T-cell (primary cell): ENCODE measurements at regions of chr5 and their contacts with region 1.

Region 1: GRCh38 chr5:134145779-134146581 is 30.8 kb downstream of the SKP1 start:
- DNase-seq: peak; percentile 49 to 90 (median 78)
- ATAC-seq: peak; percentile 59 to 70 (median 66)
- H3K4me3 ChIP-seq: no peak overlapping the region
- H3K4me3 Mint-ChIP-seq: no peak overlapping the region
- H3K27ac ChIP-seq: peak overlapping the region; percentile 21
- H3K27ac Mint-ChIP-seq: peak overlapping the region; percentile 75 to 79
- H3K4me1 ChIP-seq: peaks cover 13 to 44% of the 10 kb centered on the region in 2 experiments
- H3K4me1 Mint-ChIP-seq: peaks cover 42 to 73% (median 50%) of the 10 kb centered on the region in 3 donors
- H3K27me3 ChIP-seq: no peaks in the 10 kb centered on the region
- H3K27me3 Mint-ChIP-seq: no peaks in the 10 kb centered on the region

Region 2: DNA sequence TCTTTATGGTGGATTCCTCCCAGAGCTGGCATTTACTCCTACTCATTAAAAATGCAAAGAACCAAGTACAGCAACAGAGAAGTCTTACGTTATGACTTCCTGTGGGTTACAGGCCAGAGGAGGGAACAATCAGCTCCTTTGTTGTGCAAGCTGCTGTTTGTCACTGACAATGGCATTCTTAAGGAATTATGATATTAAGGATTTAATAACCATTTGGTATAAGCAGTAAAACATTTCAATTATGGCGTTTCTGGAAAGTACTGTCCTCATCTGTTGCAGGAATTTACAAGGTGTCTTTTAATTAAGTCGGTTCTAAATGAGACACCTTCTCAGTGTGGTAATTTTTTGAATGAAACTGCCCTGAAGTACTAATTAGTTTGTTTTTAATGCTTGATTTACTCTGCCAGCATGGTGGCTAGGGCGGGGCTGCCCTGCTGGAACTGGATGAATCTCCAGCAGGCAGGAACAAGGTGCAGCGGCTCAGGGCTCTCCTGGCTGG is 92.1 kb before region 1 on chr5:
- CTCF ChIA-PET with region 1: no interaction called
- POLR2A ChIA-PET with region 1: no interaction called
- DNase-seq: peak in 1 of 35 experiments; percentile 52
- ATAC-seq: peak; percentile 82 to 95 (median 84)
- H3K4me3 ChIP-seq: peak overlapping the region in 1 of 2 donors; percentile 6
- H3K4me3 Mint-ChIP-seq: peak overlapping the region; percentile 21 to 67 (median 36)
- H3K27ac ChIP-seq: peak overlapping the region; percentile 44
- H3K27ac Mint-ChIP-seq: peak overlapping the region; percentile 91 to 94
- H3K4me1 ChIP-seq: peaks cover 27 to 40% of the 10 kb centered on the region in 2 experiments
- H3K4me1 Mint-ChIP-seq: peaks cover 49 to 54% (median 53%) of the 10 kb centered on the region in 3 donors
- H3K27me3 ChIP-seq: no peaks in the 10 kb centered on the region
- H3K27me3 Mint-ChIP-seq: no peaks in the 10 kb centered on the region

Region 3: GRCh38 chr5:134119720-134120119 is 26.3 kb before region 1 on chr5:
- CTCF ChIA-PET with region 1: interaction called, 6 to 10 read pairs
- POLR2A ChIA-PET with region 1: interaction called, 3 to 4 read pairs
- DNase-seq: peak in 1 of 35 experiments; percentile 52
- ATAC-seq: no peak
- H3K4me3 ChIP-seq: peak overlapping the region; percentile 91 to 93
- H3K4me3 Mint-ChIP-seq: peak overlapping the region; percentile 88 to 99 (median 92)
- H3K27ac ChIP-seq: peak overlapping the region; percentile 62
- H3K27ac Mint-ChIP-seq: peak overlapping the region; percentile 92 to 97
- H3K4me1 ChIP-seq: peaks cover 26 to 81% of the 10 kb centered on the region in 2 experiments
- H3K4me1 Mint-ChIP-seq: peaks cover 45 to 79% (median 76%) of the 10 kb centered on the region in 3 donors
- H3K27me3 ChIP-seq: no peaks in the 10 kb centered on the region
- H3K27me3 Mint-ChIP-seq: no peaks in the 10 kb centered on the region

Region 4: DNA sequence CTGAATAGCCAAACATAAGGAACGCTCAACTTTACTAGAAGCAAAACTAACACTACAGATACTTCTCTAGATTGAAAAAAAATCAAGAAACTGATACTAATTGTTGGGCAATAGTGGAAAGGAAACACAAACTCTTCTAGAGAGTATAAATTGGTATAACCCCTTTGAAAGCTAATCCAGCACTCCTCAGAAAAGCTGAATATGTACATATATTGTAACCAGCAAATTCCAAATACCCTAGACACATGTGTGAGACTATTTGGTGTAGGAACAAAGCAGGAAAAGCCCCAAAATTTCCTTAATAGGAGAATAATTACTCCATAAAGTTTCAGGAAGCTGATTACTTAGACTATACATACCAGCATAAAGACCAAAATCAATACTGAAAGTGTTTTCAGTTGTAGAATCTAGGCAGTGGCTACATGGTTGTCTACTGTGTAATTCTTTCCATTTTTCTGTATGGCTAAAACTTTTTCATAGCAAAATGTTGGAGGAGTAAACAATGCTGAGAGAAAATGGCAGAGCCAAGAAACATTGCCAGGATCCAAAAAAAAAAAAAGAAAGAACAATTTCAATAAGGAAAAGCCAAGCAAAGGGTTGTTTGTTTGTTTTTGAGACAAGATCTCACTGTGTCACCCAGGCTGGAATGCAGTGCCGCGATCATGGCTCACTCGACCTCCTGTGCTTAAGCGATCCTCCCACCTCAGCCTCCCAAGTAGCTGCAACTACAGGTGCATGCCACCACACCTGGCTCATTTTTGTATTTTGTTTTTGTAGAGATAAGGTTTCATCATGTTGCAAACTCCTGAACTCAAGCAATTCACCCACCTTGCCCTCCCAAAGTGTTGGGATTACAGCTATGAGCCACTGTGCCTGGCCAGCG is 15.8 kb after region 1 on chr5:
- CTCF ChIA-PET with region 1: interaction called, 3 to 5 read pairs
- POLR2A ChIA-PET with region 1: interaction called, 3 to 10 read pairs
- DNase-seq: no peak
- ATAC-seq: no peak
- H3K4me3 ChIP-seq: no peak overlapping the region
- H3K4me3 Mint-ChIP-seq: no peak overlapping the region
- H3K27ac ChIP-seq: no peak overlapping the region
- H3K27ac Mint-ChIP-seq: peak overlapping the region in 1 of 2 donors; percentile 48
- H3K4me1 ChIP-seq: peaks cover 3 to 4% of the 10 kb centered on the region in 2 experiments
- H3K4me1 Mint-ChIP-seq: peaks cover 48 to 67% (median 50%) of the 10 kb centered on the region in 3 donors
- H3K27me3 ChIP-seq: no peaks in the 10 kb centered on the region
- H3K27me3 Mint-ChIP-seq: no peaks in the 10 kb centered on the region

Region 5: DNA sequence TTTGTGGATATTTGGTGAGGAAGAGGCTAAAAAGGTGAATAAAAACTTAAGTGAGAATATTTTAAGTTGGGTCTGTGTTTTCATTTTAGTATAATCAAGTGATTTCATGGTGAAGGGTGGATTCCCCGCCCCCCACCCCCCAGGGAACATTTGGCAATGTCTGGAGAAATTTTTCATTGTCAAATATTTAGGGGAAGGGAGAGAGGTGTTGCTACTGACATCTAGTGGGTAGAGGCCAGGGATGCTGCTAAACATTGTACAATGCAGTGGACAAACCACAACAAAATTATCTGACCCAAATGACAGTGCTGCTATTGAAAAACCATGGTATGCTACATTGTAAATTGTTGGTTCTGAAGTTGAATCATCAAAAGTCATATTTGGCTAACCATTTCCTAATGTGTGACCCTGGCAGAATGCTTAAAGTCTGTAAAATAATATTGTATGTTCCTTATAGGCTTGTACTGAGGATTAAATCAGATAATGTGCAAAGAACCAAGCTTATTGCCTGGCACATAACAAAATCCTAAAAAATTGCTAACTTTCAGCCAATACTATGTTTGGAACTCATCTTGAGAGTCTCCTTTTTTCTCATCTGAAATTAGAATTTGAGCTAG is 705.4 kb after region 1 on chr5:
- CTCF ChIA-PET with region 1: no interaction called
- POLR2A ChIA-PET with region 1: interaction called in 1 of 2 experiments, 11 read pairs
- DNase-seq: peak in 1 of 35 experiments; percentile 12
- ATAC-seq: no peak
- H3K4me3 ChIP-seq: no peak overlapping the region
- H3K4me3 Mint-ChIP-seq: no peak overlapping the region
- H3K27ac ChIP-seq: no peak overlapping the region
- H3K27ac Mint-ChIP-seq: peak overlapping the region in 1 of 2 donors; percentile 39
- H3K4me1 ChIP-seq: peaks cover 3 to 21% of the 10 kb centered on the region in 2 experiments
- H3K4me1 Mint-ChIP-seq: peaks cover 45 to 58% (median 53%) of the 10 kb centered on the region in 3 donors
- H3K27me3 ChIP-seq: no peaks in the 10 kb centered on the region
- H3K27me3 Mint-ChIP-seq: no peaks in the 10 kb centered on the region